ENCODE measurements at regions of chr10 and their contacts with region 1.

Region 1: GRCh38 chr10:32318476-32318896 is 28.5 kb downstream of the EPC1 start:
- DNase-seq: peak; percentile 33
- H3K4me3 ChIP-seq: peak overlapping the region; percentile 55
- H3K27ac ChIP-seq: peak overlapping the region; percentile 88
- H3K4me1 ChIP-seq: peaks cover 66% of the 10 kb centered on the region
- CTCF ChIP-seq: no peak

Region 2: GRCh38 chr10:32171204-32171603 is 147.3 kb before region 1 on chr10:
- CTCF ChIA-PET with region 1: no interaction called
- POLR2A ChIA-PET with region 1: no interaction called
- intact Hi-C with region 1: no loop called
- DNase-seq: no peak
- H3K4me3 ChIP-seq: no peak overlapping the region
- H3K27ac ChIP-seq: no peak overlapping the region
- H3K4me1 ChIP-seq: no peaks in the 10 kb centered on the region
- CTCF ChIP-seq: no peak

Region 3: DNA sequence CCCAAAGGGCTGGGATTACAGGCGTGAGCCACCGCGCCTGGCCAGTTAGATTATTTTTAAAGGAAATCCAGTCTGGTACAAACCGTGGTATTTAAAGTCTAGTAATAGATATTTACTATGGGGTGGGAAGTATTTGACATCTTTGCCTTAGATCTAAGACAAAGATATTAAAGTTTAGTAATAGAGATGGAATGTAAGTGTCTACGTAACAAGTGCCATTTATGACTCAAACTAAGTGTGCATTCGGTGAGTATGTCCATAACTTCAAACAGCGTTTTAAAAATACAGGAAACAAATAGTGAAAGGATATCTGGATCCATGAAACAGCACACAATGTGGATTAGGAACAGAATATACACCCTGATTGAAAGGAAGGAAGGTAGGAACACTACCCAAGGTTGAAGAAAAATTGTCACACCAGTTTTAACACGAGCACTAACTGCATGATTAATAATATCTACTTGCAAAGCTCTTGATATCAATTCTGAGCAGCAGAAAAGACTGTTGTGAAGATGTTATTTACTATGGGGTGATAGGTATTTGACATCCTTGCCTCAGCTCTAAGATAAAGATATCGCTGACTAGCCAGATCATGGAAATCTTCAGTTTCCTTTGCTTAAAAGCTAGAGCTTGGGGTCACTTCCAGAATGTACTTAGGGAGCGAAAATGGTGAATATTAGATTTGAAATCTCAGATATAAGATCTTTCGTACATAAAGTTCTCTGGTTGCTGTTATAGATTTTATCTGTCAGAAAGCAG is 20.3 kb before region 1 on chr10:
- CTCF ChIA-PET with region 1: no interaction called
- POLR2A ChIA-PET with region 1: interaction called, 21 read pairs
- intact Hi-C with region 1: no loop called
- DNase-seq: no peak
- H3K4me3 ChIP-seq: no peak overlapping the region
- H3K27ac ChIP-seq: no peak overlapping the region
- H3K4me1 ChIP-seq: no peaks in the 10 kb centered on the region
- CTCF ChIP-seq: no peak

Region 4: DNA sequence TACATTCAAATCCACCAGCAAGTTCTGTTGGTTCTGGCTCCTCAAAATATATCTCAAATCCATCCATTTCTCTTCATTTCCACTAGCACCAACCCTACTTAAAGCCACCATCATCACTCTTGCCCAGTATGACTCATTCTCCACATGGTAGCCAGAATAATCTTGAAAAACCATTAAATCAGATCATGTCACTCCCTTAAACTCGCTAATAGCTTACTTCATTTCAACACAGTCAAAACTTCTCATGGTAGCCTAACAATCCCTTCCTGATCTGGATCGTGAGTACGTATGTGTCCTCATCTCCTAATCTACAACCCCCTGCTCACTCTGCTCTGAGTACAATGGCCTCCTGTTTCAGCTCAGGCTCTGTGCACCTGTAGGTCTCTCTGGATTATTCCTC is 19.8 kb after region 1 on chr10:
- CTCF ChIA-PET with region 1: interaction called, 4 read pairs
- POLR2A ChIA-PET with region 1: interaction called, 13 read pairs
- intact Hi-C with region 1: no loop called
- DNase-seq: no peak
- H3K4me3 ChIP-seq: no peak overlapping the region
- H3K27ac ChIP-seq: no peak overlapping the region
- H3K4me1 ChIP-seq: peaks cover 14% of the 10 kb centered on the region
- CTCF ChIP-seq: no peak

Region 5: GRCh38 chr10:32362571-32362970 is 44.1 kb after region 1 on chr10:
- CTCF ChIA-PET with region 1: no interaction called
- POLR2A ChIA-PET with region 1: no interaction called
- intact Hi-C with region 1: no loop called
- DNase-seq: no peak
- H3K4me3 ChIP-seq: no peak overlapping the region
- H3K27ac ChIP-seq: no peak overlapping the region
- H3K4me1 ChIP-seq: peaks cover 8% of the 10 kb centered on the region
- CTCF ChIP-seq: no peak